Left ventricle myocardium superior (tissue), 1 donor: ENCODE measurements at regions of chr12 and their contacts with region 1.

Region 1: DNA sequence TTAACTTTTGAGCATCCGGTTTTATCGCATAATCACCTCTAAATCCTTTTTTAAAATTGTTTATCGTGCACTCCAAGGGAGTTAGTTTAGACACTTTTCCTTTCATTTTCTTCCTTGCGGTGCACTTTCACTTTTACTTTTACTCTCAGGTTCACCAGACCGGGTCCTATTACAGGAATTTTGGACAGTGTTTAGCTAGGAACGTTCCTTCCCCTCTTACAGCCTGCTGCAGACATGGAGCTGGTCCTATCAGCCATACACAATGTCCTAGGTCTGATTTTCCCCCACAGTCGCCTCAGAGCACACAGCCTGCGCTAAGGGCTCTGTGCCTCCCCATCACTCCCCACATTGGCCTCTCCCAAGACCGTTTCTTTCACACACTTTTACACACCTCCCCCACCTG is 103.9 kb downstream of the ALG10 start:
- DNase-seq: no peak
- ATAC-seq: no peak

Region 2: DNA sequence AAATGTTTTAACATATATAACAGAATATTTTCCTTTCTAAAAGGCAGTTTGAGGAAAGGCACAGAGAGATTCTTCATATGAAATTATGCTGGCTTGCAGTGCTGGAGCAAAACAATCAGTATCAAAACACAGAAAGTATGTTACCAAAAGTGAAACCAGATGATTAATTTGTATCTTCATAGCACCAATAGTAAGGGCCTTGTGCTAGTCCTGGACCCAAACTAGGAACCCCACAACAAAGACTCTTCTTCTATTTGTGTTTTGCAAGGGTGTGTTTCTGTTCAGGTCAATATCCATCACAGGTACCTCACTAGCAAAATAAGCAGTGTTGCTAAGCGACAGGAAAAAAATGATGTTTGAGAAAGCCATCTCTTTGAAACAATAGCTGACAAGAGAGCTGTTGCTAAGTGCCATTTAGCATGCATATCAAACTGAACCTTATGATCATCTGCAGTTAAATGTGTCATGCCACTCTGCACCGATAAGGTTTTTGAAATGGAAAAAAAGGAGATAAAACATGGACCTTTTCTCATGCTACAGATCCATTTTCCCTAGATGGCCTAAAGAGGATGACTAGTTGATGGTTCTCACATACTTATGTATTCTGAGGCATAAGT is 300.1 kb before region 1 on chr12:
- intact Hi-C with region 1: no loop called
- DNase-seq: no peak
- ATAC-seq: no peak

Region 3: GRCh38 chr12:34218165-34219045 is 92.2 kb after region 1 on chr12:
- intact Hi-C with region 1: loop called (anchors 5 kb)
- DNase-seq: peak; percentile 58
- ATAC-seq: peak; percentile 89

Region 4: DNA sequence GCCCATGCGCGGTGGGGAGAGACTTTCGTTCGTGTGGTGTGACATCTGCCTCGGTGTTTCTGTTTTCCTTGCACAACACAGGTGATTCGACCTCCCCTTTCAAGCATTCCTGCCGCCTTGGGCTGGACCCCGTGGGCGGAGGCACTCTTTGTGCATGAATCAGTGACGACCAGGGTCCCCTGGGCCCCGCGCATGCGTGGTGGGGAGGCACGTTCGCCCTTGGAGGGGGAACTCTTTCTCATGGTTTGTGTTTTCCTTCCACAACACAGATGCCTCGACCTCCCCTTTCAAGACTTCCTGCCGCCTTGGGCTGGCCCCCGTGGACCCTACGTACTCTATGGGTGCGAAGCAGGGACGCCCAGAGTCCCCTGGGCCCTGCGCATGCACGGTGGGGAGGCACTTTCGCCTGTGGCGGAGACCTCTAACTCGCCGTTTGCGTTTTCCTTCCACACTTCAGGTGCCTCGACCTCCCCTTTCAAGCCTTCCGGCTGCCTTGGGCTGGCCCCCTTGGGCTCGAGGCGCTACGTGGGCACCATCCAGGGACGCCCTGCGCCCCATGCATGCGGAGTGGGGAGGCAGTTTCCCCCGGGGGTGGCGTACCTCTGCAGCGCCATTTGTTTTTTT is 236.9 kb after region 1 on chr12:
- intact Hi-C with region 1: no loop called
- DNase-seq: no peak
- ATAC-seq: no peak